PC-3 (cell line): ENCODE measurements at regions of chr6 and their contacts with region 1.

Region 1: DNA sequence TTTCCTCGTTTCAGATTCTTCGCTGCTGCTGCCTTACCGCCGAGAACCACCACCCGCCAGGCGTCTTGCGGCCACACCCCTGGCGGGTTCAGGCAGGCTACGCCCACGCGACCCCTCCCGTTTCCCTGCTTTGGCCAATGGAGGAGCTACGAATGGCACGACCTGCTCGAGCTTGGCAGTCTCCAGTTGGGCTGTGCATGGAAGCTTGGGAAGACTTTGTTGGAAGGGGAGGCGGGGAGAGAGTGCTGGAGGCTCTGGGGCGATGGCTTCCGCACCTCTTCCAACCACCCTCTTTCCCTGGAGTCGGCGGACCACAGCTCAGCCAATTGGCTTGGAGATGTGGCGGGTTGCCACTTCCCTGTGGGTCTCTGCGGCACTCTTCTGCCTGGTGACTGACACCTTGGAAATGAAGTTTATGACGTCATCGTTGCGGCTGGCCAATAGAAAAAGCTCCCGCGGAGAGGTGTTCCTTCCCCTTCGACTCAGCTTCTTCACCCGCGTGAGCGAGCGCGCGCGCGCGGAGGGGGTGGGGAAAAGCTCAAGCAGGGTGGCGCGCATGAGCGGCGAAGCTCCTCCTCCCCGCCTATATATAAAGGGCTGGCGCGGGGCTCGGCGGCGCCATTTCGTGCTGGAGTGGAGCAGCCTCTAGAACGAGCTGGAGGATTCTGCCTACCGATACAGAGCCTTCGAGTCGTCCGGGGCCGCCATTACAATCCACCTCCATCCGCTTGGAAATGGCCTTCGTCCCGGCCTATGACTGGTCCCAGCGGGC is 3.4 kb downstream of the BRD2 start:
- DNase-seq: peak; percentile 100
- ATAC-seq: peak; percentile 40
- H3K4me3 ChIP-seq: peak overlapping the region; percentile 98
- H3K27ac ChIP-seq: peak overlapping the region; percentile 99
- H3K4me1 ChIP-seq: peaks cover 51% of the 10 kb centered on the region
- H3K27me3 ChIP-seq: no peaks in the 10 kb centered on the region
- CTCF ChIP-seq: no peak

Region 2: DNA sequence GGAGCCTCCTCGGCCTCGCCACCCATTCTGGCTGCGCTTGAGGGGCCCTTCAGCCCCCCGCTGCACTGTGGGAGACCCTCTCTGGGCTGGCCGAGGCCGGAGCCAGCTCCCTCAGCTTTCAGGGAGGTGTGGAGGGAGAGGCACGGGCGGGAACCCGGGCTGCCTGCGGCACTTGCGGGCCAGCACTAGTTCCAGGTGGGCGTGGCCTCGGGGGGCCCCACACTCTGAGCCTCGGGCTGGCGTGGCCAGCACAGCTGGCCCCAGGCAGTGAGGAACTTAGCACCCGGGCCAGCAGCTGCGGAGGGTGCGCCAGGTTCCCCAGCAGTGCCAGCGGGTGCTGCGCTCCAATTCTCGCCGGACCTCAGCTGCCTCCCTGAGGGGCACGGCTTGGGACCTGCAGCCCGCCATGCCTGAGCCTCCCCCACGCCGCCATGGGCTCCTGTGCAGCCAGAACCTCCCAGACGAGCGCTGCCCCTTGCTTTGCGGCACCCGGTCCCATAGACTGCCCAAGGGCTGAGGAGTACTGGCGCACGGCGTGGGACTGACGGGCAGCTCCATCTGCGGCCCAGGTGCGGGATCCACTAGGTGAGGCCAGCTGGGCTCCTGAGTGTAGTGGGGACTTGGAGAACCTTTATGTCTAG is 1955.0 kb before region 1 on chr6:
- CTCF ChIA-PET with region 1: interaction called, 10 read pairs
- POLR2A ChIA-PET with region 1: no interaction called
- intact Hi-C with region 1: no loop called
- DNase-seq: no peak
- ATAC-seq: no peak
- H3K4me3 ChIP-seq: no peak overlapping the region
- H3K27ac ChIP-seq: no peak overlapping the region
- H3K4me1 ChIP-seq: no peaks in the 10 kb centered on the region
- H3K27me3 ChIP-seq: no peaks in the 10 kb centered on the region
- CTCF ChIP-seq: no peak

Region 3: DNA sequence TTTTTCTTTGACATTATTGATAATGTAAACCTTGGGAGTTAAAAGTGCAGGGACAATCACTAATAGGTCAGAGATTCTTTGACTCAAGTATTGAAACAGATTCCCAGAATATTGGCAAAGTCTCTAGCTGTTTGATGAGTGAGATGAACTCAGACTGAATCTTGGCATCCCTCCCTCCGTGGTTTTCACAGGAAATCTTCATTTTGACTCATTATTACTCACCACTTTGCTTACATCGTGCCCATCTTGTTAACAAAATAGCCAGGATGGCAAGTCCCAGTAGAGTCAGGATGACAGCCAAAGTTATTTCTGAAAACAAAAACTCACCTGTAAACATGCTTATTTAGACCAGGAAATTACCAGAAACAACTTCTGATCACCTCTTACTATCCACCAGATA is 602.1 kb before region 1 on chr6:
- CTCF ChIA-PET with region 1: no interaction called
- POLR2A ChIA-PET with region 1: interaction called, 13 read pairs
- intact Hi-C with region 1: no loop called
- DNase-seq: peak; percentile 97
- ATAC-seq: peak; percentile 84
- H3K4me3 ChIP-seq: no peak overlapping the region
- H3K27ac ChIP-seq: peak overlapping the region; percentile 93
- H3K4me1 ChIP-seq: peaks cover 36% of the 10 kb centered on the region
- H3K27me3 ChIP-seq: no peaks in the 10 kb centered on the region
- CTCF ChIP-seq: no peak

Region 4: DNA sequence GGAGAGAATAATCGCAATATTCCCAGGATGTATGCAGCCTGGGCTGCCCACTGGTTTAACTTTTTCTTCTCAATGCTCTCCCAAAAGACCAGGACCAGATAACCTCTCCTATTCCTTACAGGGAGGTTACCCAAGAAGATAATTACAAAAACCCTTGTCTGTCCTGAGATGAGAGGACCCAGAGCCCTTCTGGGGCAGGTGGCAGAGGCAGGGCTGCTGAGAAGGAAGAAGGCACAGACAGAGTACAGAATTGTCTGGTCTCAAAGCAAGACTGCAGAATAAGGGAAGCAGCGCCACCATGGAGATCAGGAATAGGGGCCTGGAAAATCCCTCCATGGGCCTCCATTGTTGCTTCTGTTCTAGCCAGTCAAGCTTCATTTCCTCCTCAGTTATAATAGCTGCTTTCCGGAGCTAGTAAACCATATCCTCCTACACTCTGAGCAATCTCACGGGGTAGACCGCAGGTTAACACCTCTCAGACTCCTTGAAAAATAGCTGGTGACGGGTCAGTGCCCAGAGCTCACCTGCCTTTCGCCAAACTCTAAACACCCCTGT is 30.5 kb before region 1 on chr6:
- CTCF ChIA-PET with region 1: no interaction called
- POLR2A ChIA-PET with region 1: no interaction called
- intact Hi-C with region 1: no loop called
- DNase-seq: no peak
- ATAC-seq: no peak
- H3K4me3 ChIP-seq: no peak overlapping the region
- H3K27ac ChIP-seq: no peak overlapping the region
- H3K4me1 ChIP-seq: peaks cover 3% of the 10 kb centered on the region; the same call in 1 of the 2 replicates
- H3K27me3 ChIP-seq: peaks cover 25% of the 10 kb centered on the region
- CTCF ChIP-seq: no peak

Region 5: DNA sequence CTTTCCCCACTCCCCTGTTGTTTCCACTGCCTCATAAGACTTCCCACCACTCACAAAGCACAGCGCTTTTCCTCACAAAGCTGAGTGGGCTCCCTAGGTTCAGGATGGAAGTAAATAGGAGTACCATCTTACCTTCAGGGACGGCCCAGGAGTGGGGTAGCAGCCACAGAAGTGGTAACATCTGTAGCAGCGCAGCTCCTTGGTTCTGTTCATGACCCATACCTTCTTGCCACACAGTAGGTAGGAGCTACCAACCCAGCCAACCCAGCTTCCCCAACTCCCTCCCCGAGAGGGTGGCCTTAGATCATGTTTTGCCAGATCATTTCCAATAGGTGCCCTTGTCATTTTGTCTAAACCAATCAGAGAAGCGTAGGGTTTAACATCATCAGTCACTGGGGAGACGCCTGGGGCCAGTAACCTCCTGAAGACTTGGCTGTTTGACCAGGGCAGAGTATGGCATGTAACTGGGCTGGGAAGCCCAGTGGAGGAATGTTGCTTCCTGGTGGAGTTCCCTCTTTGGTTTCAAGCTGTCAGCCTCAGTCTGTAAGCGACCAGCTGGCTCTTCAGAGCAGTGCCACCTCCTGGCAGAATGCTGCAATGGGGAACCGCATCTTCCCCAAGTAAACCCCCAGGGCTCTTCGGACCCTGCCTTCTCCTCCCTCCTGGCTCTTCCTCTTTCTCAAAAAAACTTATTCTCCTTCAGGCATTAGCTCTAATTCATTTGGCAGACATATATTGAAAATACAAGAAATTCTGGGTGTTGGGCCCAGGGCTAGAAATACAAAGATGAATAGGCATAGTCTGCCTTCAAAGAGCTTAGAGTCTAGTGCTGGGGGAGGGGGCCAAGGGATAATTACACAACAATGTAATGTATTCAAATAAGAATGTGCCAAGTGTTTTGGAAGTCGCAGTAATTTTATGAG is 18.7 kb before region 1 on chr6 and contains the start of gene HLA-DMA:
- CTCF ChIA-PET with region 1: interaction called, 13 read pairs
- POLR2A ChIA-PET with region 1: interaction called, 24 read pairs
- intact Hi-C with region 1: loop called (anchors 1 kb)
- DNase-seq: peak; percentile 96
- ATAC-seq: peak; percentile 97
- H3K4me3 ChIP-seq: no peak within 1 kb of the TSS
- H3K27ac ChIP-seq: no peak within 1 kb of the TSS
- H3K4me1 ChIP-seq: no peaks in the 10 kb centered on the region; the same call in 1 of the 2 replicates
- H3K27me3 ChIP-seq: no peaks in the 10 kb centered on the region
- CTCF ChIP-seq: peak; percentile 79
- total RNA-seq, gene HLA-DMA: 1.7 and 3.0 TPM in 2 replicates

Region 6: DNA sequence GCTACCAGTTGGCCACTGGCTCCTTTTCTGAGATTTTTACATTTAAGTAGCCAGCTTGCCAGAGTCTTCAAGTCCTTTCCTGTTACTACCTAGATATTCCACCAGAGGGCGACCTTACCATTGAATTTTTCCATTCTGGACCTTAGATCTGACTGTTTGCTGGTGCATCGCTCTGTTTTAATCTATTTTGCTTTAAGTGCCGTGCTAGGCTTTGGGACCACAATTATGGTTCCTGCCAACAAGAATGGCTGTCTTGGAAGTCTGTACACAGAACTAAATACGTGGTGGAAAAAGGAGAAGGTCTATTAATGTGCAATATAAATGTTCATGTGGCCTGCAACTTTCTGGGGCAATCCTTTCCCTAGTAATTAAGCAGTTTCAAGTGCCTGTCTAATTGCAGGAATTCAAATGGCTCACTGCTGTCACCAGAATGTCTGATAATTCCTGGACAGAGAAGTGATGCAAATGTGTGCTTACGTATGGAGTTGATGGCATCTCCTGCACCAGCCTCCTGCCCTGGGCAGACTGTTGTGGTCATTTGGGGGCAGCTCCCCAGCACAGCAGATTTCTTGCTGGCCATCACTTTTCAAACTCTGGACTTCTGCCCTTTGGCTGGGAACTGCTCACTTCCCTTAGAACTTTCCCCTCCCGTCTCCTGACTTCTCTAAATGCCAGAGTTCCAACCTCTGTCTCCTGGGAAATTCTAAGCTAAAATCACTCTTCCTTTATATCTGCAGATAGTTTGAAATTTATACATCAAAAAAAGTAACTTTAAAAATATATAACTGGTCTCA is 43.3 kb after region 1 on chr6:
- CTCF ChIA-PET with region 1: no interaction called
- POLR2A ChIA-PET with region 1: no interaction called
- intact Hi-C with region 1: no loop called
- DNase-seq: peak; percentile 83
- ATAC-seq: peak; percentile 74
- H3K4me3 ChIP-seq: no peak overlapping the region
- H3K27ac ChIP-seq: no peak overlapping the region
- H3K4me1 ChIP-seq: no peaks in the 10 kb centered on the region
- H3K27me3 ChIP-seq: peaks cover 83% of the 10 kb centered on the region
- CTCF ChIP-seq: peak; percentile 82

Region 7: DNA sequence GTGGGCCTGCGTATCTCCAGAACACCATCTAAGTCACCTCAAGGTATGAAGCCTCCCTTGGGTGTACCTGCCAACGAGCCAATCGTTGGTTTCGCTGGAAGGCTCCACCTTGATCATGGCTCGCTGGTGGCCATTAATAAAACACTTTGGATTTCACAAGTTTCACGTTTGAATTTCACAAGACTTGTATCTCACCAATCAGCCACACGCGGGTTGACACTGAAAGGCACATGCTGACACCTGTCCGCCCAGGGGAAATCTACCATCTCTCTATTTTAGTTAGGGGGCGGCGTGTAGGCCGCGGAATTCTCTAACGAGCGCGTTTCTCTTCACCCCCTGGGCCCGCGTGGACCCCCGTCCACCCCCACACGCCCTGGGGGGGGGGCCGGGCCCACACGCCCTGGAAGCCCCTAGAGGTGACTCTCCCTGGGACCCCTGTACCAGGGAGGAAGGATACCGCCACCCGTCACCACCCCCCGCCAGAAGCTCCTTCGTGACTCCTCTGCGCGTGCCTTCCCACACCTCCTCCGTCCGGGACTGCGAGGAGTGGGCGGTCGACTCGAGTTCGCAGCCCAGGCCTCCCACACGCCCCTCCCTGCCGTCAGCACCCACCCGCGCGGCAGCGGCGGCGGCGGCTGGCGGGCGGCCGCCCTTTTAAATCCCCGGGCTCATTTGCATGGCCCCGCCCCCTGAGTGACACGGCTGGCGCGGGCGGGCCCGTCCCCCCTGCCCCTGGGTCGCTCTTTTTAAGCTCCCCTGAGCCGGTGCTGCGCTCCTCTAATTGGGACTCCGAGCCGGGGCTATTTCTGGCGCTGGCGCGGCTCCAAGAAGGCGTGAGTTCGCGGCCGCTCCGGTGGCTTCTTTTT is 1264.6 kb after region 1 on chr6 and contains the start of gene HMGA1:
- CTCF ChIA-PET with region 1: no interaction called
- POLR2A ChIA-PET with region 1: interaction called, 10 read pairs
- intact Hi-C with region 1: no loop called
- DNase-seq: peak; percentile 94
- ATAC-seq: peak; percentile 63
- H3K4me3 ChIP-seq: peak within 1 kb of the TSS; percentile 94
- H3K27ac ChIP-seq: peak within 1 kb of the TSS; percentile 81
- H3K4me1 ChIP-seq: peaks cover 42% of the 10 kb centered on the region
- H3K27me3 ChIP-seq: no peaks in the 10 kb centered on the region
- CTCF ChIP-seq: 0 out of 2 replicates have a peak, but pooled peaks have one; percentile 11
- total RNA-seq, gene HMGA1: 1,115 and 1,441 TPM in 2 replicates